ENCODE measurements at regions of chr9 and their contacts with region 1.

Region 1: DNA sequence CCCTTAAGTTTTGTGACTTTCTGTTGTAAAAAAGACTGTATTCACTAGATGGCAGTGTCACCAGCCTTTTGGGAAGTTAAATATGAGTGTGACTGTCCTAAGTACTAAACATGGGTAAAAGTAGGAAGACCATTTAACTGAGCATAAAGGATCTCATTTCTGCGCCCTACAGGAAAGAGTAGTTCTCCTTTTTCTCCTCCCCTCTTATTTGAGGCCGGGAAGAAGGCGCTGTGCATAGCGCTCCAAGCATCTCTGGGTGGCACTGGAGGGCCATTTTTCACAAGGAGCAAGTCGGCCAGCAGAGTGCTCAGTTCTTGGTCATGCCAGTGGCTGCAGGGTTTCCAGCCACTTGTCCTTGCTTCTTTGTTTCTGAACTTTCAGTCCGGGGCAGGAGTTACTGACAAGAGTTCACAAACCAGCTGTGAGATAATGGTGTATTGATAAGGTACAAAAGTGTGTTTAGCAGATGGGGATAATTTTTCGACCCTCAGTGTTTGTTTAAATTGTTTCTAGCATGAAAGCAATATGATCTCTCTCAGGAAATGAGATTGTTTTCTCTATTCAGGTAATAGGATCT is 227.6 kb upstream of the DMRT1 start:
- DNase-seq: peak; percentile 83
- H3K4me3 ChIP-seq: no peak overlapping the region
- H3K27ac ChIP-seq: peak overlapping the region; percentile 49 to 55
- H3K4me1 ChIP-seq: peaks cover 5% of the 10 kb centered on the region
- H3K27me3 ChIP-seq: no peaks in the 10 kb centered on the region
- CTCF ChIP-seq: peak; percentile 53 to 93 (median 86)
- POLR2A ChIP-seq: no peak

Region 2: DNA sequence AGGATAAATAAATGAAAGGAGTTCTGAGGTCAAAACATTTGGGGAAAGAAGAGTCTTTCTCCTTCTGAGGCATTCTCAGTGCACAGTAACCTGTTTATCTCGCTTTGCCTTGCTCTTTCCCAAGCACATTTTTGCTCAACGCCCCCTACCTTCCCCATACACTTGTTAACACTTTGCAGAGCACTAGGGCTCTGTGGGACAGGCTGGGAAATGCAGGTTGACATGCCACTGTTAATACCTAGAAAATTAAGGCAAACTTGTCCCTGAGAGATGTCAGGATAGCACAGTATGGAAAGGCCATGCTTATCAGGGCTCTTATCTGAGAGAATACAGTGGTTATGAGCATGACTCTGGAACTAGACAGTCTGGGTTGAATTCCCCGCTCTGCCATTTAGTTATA is 247.2 kb before region 1 on chr9:
- intact Hi-C with region 1: no loop called
- DNase-seq: no peak
- H3K4me3 ChIP-seq: no peak overlapping the region
- H3K27ac ChIP-seq: no peak overlapping the region
- H3K4me1 ChIP-seq: no peaks in the 10 kb centered on the region
- H3K27me3 ChIP-seq: no peaks in the 10 kb centered on the region
- CTCF ChIP-seq: no peak
- POLR2A ChIP-seq: no peak

Region 3: DNA sequence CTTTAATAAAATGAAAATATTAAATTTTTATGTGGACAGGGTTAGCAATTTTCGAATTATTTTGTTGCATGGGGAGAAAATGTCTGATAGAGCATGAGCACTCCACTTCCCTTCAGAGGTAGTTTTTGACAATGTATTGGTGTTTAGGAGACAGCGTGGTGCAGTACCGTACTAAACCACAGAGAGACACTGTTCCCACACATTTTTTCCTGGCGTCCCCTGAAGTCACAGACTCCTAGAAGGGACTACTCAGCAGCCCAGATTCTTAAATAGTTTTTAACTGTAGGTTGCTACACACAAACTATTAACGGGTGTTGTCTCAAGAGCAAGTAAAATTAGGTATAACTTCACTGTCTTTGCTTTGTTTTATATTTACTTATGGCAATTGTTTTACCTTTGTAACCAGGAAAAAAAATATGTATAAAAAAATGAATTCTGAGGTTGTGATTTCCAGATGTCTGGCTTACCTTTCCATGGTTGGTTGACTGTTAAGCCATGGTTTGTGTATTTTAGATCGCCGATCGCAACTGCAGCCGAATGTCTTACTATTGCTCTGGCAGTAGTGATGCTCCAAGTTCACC is 228.0 kb before region 1 on chr9:
- intact Hi-C with region 1: loop called (anchors 5 kb)
- DNase-seq: peak; percentile 48
- H3K4me3 ChIP-seq: no peak overlapping the region
- H3K27ac ChIP-seq: no peak overlapping the region
- H3K4me1 ChIP-seq: no peaks in the 10 kb centered on the region
- H3K27me3 ChIP-seq: no peaks in the 10 kb centered on the region
- CTCF ChIP-seq: peak; percentile 78 to 92 (median 86)
- POLR2A ChIP-seq: no peak

Region 4: GRCh38 chr9:489198-490197 is 124.4 kb before region 1 on chr9:
- intact Hi-C with region 1: no loop called
- DNase-seq: peak; percentile 43
- H3K4me3 ChIP-seq: no peak overlapping the region
- H3K27ac ChIP-seq: peak overlapping the region in 1 of 2 donors; percentile 26
- H3K4me1 ChIP-seq: no peaks in the 10 kb centered on the region
- H3K27me3 ChIP-seq: no peaks in the 10 kb centered on the region
- CTCF ChIP-seq: no peak
- POLR2A ChIP-seq: no peak

Region 5: DNA sequence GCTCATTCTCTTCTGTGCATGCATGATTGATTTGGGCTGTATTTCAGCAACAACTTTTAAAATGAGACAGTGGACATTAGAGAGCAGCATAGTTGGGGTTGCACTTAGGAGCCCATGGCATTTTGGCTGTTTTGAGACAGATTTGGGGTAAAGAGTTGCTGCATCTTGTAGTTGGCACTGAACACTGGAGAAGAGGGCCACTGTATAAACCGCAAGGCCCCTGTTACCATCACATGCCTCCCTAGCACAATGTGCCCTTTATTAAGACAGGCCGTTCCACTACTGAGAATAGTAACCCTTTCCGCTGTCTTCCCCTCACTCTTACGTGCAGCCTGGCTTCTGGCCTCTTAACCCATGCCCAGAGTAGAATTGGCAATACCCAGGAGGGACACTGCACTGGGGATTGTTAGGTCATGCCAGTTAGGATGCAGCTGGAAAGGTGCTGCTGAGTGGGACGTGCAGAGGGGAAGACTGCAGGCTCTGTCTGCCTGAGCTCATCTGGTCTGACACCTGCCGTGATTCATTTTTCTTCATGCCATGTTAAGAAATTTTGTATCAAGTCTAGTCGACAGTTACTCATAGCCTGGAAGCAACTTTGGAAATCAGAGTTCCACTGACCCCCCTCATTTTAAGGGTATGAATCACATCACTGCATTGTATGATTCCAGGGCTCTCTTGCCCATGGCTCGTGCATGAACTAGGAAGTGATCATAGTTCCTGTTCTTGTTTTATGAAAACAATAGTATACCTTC is 80.7 kb after region 1 on chr9:
- intact Hi-C with region 1: loop called (anchors 5 kb)
- DNase-seq: no peak
- H3K4me3 ChIP-seq: peak overlapping the region in 1 of 2 donors; percentile 18
- H3K27ac ChIP-seq: peak overlapping the region; percentile 82 to 84
- H3K4me1 ChIP-seq: peaks cover 25% of the 10 kb centered on the region
- H3K27me3 ChIP-seq: no peaks in the 10 kb centered on the region
- CTCF ChIP-seq: no peak
- POLR2A ChIP-seq: no peak

Region 6: GRCh38 chr9:738209-738915 is 124.5 kb after region 1 on chr9:
- intact Hi-C with region 1: no loop called
- DNase-seq: peak; percentile 64
- H3K4me3 ChIP-seq: no peak overlapping the region
- H3K27ac ChIP-seq: peak overlapping the region; percentile 58 to 69
- H3K4me1 ChIP-seq: peaks cover 4% of the 10 kb centered on the region
- H3K27me3 ChIP-seq: no peaks in the 10 kb centered on the region
- CTCF ChIP-seq: no peak
- POLR2A ChIP-seq: no peak

Region 7: GRCh38 chr9:763692-764524 is 150.0 kb after region 1 on chr9:
- intact Hi-C with region 1: loop called (anchors 2 kb)
- DNase-seq: peak; percentile 65
- H3K4me3 ChIP-seq: no peak overlapping the region
- H3K27ac ChIP-seq: no peak overlapping the region
- H3K4me1 ChIP-seq: no peaks in the 10 kb centered on the region
- H3K27me3 ChIP-seq: no peaks in the 10 kb centered on the region
- CTCF ChIP-seq: peak; percentile 35 to 93 (median 80)
- POLR2A ChIP-seq: no peak

Region 8: GRCh38 chr9:806285-807156 is 192.7 kb after region 1 on chr9:
- intact Hi-C with region 1: loop called (anchors 2 kb)
- DNase-seq: no peak
- H3K4me3 ChIP-seq: no peak overlapping the region
- H3K27ac ChIP-seq: no peak overlapping the region
- H3K4me1 ChIP-seq: peaks cover 11% of the 10 kb centered on the region
- H3K27me3 ChIP-seq: no peaks in the 10 kb centered on the region
- CTCF ChIP-seq: peak; percentile 38 to 66 (median 60)
- POLR2A ChIP-seq: no peak